CD8-positive, alpha-beta T cell (primary cell): ENCODE measurements at regions of chr13 and their contacts with region 1.

Region 1: DNA sequence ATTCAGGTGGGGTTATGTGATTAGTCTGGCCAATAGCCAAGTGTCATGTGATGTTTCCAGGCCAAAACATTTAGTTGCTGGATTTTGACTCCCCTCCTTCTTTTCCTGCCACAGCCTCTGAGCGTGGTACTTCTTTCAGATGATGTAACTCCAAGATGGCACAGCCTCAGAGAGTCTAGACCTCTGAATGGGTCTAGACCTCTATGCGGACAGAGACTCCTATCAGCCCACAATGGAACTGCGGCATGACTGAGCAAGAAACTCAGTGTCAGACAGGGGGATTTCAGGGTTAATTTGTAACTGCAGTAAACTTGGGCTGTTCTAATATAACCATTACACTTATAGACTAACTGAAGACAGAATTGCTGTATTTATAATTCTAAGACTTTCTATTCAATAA is 42.6 kb upstream of the ZDHHC20 start:
- DNase-seq: no peak
- ATAC-seq: no peak
- H3K4me3 ChIP-seq: no peak overlapping the region
- H3K4me3 Mint-ChIP-seq: no peak overlapping the region
- H3K27ac ChIP-seq: no peak overlapping the region
- H3K27ac Mint-ChIP-seq: peak overlapping the region; percentile 3
- H3K4me1 ChIP-seq: no peaks in the 10 kb centered on the region
- H3K4me1 Mint-ChIP-seq: no peaks in the 10 kb centered on the region
- H3K27me3 ChIP-seq: no peaks in the 10 kb centered on the region
- H3K27me3 Mint-ChIP-seq: no peaks in the 10 kb centered on the region
- CTCF ChIP-seq: no peak

Region 2: DNA sequence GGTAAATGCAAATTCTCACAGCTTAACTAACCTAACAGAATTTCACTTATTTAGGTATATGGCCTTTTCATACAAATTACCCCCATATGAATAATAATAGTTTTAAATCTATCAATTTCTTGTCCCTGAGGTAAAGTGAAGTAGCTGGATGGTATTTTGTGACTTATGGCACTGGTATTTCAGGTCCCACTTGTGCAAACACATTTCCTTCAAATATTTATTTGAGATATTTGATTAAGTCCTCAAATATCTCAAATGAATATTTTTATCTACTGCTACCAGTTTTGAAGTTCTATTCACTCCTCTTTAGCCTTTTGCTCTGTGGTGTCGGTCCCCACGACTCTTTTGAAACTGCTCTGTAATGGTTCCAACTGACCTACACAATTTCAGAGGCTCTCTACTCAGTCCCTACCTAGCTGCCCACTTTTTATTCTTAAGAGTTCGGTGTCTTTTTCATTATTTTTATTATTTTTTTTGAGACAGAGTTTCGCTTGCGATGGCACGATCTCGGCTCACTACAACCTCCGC is 17.0 kb after region 1 on chr13:
- CTCF ChIA-PET with region 1: no interaction called
- POLR2A ChIA-PET with region 1: no interaction called
- intact Hi-C with region 1: loop called in 1 of 2 experiments (anchors 2 kb)
- DNase-seq: no peak
- ATAC-seq: no peak
- H3K4me3 ChIP-seq: no peak overlapping the region
- H3K4me3 Mint-ChIP-seq: no peak overlapping the region
- H3K27ac ChIP-seq: no peak overlapping the region
- H3K27ac Mint-ChIP-seq: no peak overlapping the region
- H3K4me1 ChIP-seq: no peaks in the 10 kb centered on the region
- H3K4me1 Mint-ChIP-seq: no peaks in the 10 kb centered on the region
- H3K27me3 ChIP-seq: no peaks in the 10 kb centered on the region
- H3K27me3 Mint-ChIP-seq: no peaks in the 10 kb centered on the region
- CTCF ChIP-seq: no peak

Region 3: DNA sequence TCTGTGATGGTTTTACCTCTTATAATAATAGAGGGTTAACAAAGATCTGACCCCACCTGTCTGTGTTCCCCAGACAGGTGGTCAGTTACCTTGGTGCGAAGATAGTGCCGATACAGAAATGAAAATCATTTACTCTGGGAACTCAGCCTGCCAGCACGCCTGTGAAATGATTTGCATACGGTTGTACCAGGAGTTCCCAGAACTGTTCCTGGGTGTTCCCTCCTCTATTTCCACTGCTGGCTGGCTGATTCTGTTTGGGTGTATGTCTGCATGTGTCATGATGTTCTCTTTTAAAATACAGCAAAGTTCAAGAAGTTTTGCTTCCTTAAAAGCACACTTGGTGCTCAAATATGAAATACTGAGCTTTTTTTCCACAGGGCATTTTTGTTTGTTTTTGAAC is 696.3 kb after region 1 on chr13:
- CTCF ChIA-PET with region 1: no interaction called
- POLR2A ChIA-PET with region 1: no interaction called
- intact Hi-C with region 1: no loop called
- DNase-seq: no peak
- ATAC-seq: no peak
- H3K4me3 ChIP-seq: no peak overlapping the region
- H3K4me3 Mint-ChIP-seq: no peak overlapping the region
- H3K27ac ChIP-seq: no peak overlapping the region
- H3K27ac Mint-ChIP-seq: no peak overlapping the region
- H3K4me1 ChIP-seq: no peaks in the 10 kb centered on the region
- H3K4me1 Mint-ChIP-seq: peaks cover 3% of the 10 kb centered on the region
- H3K27me3 ChIP-seq: no peaks in the 10 kb centered on the region
- H3K27me3 Mint-ChIP-seq: no peaks in the 10 kb centered on the region
- CTCF ChIP-seq: no peak